ENCODE measurements at regions of chr3 and their contacts with region 1.

Region 1: GRCh38 chr3:179037351-179037750 is 34.3 kb downstream of the ZMAT3 start:
- DNase-seq: peak; percentile 82
- H3K4me3 Mint-ChIP-seq: peak overlapping the region; percentile 61
- H3K27ac Mint-ChIP-seq: peak overlapping the region; percentile 77
- H3K4me1 Mint-ChIP-seq: peaks cover 11% of the 10 kb centered on the region
- H3K27me3 Mint-ChIP-seq: no peaks in the 10 kb centered on the region

Region 2: GRCh38 chr3:177852001-177852816 is 1185.1 kb before region 1 on chr3:
- CTCF ChIA-PET with region 1: no interaction called
- intact Hi-C with region 1: no loop called
- DNase-seq: no peak
- H3K4me3 Mint-ChIP-seq: no peak overlapping the region
- H3K27ac Mint-ChIP-seq: no peak overlapping the region
- H3K4me1 Mint-ChIP-seq: no peaks in the 10 kb centered on the region
- H3K27me3 Mint-ChIP-seq: no peaks in the 10 kb centered on the region

Region 3: DNA sequence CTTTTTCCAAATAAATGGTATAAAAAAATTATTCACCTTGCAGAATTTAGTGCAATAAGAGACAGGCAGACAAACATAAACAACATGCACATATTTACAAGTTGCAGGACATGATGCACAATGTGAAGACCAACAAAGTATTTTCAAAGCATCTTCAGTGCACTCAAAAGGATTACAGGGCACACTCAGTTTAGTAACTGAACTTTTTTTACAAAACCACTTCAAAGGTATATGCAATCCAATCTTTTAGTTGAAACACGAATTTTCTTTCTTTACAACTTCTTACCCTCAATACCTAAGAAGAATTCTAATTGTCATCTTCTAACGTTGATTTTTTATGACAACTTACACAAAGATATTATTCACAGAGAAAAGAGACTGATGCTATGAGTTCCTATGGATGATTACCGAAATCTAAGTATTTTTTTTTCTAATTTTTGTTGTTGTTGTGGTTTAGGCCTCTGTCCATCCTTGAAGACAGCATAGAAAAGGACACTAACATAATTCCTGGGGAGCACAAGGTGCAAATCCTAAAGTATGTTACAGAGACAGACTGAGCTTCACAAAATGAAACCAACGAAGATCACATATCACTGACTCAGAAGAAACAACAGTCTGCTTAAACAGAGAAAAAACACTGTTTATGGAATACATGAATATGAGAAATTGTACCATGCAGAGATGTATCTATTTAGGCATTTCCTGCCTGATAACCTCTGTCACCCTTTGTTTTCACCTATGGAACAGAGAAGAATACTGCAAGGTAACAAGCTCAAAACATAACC is 16.0 kb before region 1 on chr3:
- CTCF ChIA-PET with region 1: interaction called, 8 read pairs
- intact Hi-C with region 1: loop called (anchors 1 kb)
- DNase-seq: no peak
- H3K4me3 Mint-ChIP-seq: peak overlapping the region; percentile 37
- H3K27ac Mint-ChIP-seq: peak overlapping the region; percentile 27
- H3K4me1 Mint-ChIP-seq: peaks cover 39% of the 10 kb centered on the region
- H3K27me3 Mint-ChIP-seq: no peaks in the 10 kb centered on the region